ENCODE measurements at regions of chr19 and their contacts with region 1.

Region 1: DNA sequence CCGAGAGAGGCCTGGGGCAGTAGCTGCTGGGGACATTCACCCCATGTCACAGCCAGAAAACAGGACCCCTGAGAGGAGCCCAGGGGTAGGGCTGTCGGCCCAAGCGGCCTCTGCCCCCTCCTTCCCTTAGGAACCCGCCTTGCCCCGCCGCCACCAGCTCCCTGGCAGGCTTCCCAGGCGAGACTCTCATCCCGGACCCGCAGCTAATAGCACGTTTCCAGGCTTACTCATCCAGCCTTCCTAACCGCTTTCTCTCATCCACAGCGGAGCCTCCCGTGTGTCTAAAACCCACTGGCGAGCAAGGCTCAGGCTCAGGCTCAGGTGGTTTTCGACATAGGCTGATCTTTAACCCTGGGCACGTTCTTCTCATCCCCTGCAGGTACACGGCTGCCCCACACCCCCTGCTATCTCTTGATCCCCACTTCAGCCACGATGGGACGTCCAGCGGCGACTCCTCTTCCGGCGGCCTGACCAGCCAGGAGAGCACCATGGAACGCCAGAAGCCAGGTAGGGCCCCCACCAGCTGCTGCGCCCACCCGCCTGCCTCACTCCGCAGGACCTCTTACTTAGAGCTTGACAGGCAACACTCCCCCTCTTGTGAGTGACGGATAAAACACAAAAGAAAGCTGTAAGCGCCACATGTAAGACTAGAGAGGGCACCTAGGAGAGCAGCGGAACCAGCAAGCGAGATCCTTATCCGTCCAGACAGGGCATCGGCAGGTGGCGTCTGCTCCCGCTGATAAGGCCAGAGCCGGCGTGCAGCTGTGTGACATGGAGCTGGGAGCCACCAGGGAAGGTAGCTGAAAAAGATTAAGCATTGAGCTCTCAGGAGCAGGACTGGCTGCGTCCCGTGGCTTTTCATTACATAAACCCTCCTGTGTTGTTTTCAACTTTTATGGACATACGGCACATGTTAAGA is 71.3 kb downstream of the DPF1 start:
- DNase-seq: peak; percentile 78
- H3K4me3 ChIP-seq: no peak overlapping the region
- H3K27ac ChIP-seq: peak overlapping the region; percentile 45 to 90
- H3K4me1 ChIP-seq: peaks cover 13 to 19% of the 10 kb centered on the region in 2 experiments; a peak in 2 of 4 replicates
- H3K27me3 ChIP-seq: no peaks in the 10 kb centered on the region
- CTCF ChIP-seq: no peak
- EP300 ChIP-seq: peak; percentile 20 to 61; a peak in 3 of 4 replicates
- RAD21 ChIP-seq: peak; percentile 40; the same call in 1 of the 2 replicates

Region 2: DNA sequence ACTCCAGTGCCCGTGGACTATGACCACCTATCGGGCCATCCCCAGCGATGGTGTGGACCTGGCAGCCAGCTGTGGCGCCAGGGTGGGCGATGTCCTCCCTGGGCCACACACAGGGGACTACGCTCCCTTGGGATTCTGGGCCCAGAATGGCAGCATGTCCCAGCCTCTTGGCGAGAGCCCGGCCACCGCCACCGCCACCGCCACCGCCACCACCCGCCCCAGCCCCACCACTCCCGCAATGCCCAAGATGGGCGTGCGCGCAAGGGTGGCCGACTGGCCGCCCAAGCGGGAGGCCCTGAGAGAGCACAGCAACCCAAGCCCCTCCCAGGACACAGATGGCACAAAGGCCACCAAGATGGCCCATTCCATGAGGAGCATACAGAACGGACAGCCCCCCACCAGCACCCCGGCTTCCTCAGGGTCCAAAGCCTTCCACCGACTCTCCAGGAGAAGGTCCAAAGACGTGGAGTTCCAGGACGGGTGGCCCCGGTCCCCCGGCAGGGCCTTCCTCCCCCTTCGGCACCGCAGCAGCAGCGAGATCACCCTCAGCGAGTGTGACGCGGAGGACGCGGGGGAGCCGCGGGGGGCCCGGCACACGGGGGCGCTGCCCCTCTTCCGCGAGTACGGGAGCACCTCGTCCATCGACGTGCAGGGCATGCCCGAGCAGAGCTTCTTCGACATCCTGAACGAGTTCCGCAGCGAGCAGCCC is 71.0 kb before region 1 on chr19:
- CTCF ChIA-PET with region 1: no interaction called
- POLR2A ChIA-PET with region 1: no interaction called
- DNase-seq: no peak
- H3K4me3 ChIP-seq: no peak overlapping the region
- H3K27ac ChIP-seq: no peak overlapping the region
- H3K4me1 ChIP-seq: 0 out of 4 replicates have a peak, but pooled peaks cover 0 to 4% of the 10 kb centered on the region in 2 experiments
- H3K27me3 ChIP-seq: no peaks in the 10 kb centered on the region
- CTCF ChIP-seq: no peak
- EP300 ChIP-seq: no peak
- RAD21 ChIP-seq: no peak

Region 3: DNA sequence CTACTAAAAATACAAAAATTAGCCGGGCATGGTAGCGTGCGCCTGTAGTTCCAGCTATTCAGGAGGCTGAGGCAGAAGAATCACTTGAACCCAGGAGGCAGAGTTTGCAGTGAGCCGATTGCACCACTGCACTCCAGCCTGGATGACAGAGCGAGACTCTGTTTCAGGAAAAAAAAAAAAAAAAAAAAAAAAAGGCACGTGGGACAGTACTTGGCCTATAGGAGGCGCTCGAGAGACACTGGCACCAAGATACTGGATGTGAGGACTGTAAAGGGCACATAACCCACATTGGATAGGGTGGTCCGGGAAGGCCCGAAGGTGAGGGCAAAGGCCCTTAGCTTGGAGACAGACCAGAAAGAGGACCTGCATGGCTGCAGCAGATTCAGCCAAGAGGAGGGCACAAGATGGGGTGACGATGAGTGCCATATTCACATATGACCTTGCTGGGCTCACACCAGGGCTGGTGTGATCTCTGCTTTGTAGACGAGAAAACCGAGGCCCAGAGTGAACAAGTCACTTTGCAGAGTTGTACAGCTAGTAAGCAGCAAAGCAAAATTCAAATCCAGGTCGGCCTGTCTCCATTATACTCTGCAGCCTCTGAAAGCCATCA is 18.1 kb before region 1 on chr19:
- CTCF ChIA-PET with region 1: interaction called, 70 read pairs
- POLR2A ChIA-PET with region 1: no interaction called
- DNase-seq: peak; percentile 65
- H3K4me3 ChIP-seq: peak overlapping the region in 1 of 2 experiments; percentile 16; a peak in 1 of 4 replicates
- H3K27ac ChIP-seq: no peak overlapping the region
- H3K4me1 ChIP-seq: no peaks in the 10 kb centered on the region; a peak in 1 of 4 replicates
- H3K27me3 ChIP-seq: no peaks in the 10 kb centered on the region
- CTCF ChIP-seq: peak; percentile 75
- EP300 ChIP-seq: no peak
- RAD21 ChIP-seq: peak; percentile 37

Region 4: GRCh38 chr19:38224014-38224862 is 71.5 kb after region 1 on chr19 and contains the start of gene DPF1:
- CTCF ChIA-PET with region 1: interaction called, 10 read pairs
- POLR2A ChIA-PET with region 1: no interaction called
- DNase-seq: peak; percentile 99
- H3K4me3 ChIP-seq: peak within 1 kb of the TSS; percentile 53 to 65
- H3K27ac ChIP-seq: peak within 1 kb of the TSS in 1 of 2 experiments; percentile 31; a peak in 1 of 4 replicates
- H3K4me1 ChIP-seq: peaks cover 0 to 9% of the 10 kb centered on the region in 2 experiments; a peak in 1 of 4 replicates
- H3K27me3 ChIP-seq: no peaks in the 10 kb centered on the region
- CTCF ChIP-seq: peak; percentile 28
- EP300 ChIP-seq: no peak
- RAD21 ChIP-seq: 0 out of 2 replicates have a peak, but pooled peaks have one; percentile 11
- polyA plus RNA-seq, gene DPF1: 4.3 and 4.8 TPM in 2 replicates

Measured in SK-N-SH (cell line).